IMR-90 (cell line): ENCODE measurements at regions of chr2 and their contacts with region 1.

Region 1: GRCh38 chr2:11224887-11225286 is 69.6 kb downstream of the SLC66A3 start:
- DNase-seq: no peak
- ATAC-seq: no peak
- H3K4me3 ChIP-seq: no peak overlapping the region
- H3K27ac ChIP-seq: no peak overlapping the region
- H3K4me1 ChIP-seq: no peaks in the 10 kb centered on the region
- H3K27me3 ChIP-seq: no peaks in the 10 kb centered on the region
- CTCF ChIP-seq: no peak
- POLR2A ChIP-seq: no peak
- RAD21 ChIP-seq: no peak

Region 2: GRCh38 chr2:11187083-11187619 is 37.7 kb before region 1 on chr2:
- CTCF ChIA-PET with region 1: no interaction called
- POLR2A ChIA-PET with region 1: no interaction called
- dilution Hi-C with region 1: no loop called
- in situ Hi-C with region 1: no loop called
- intact Hi-C with region 1: loop called (anchors 5 kb)
- DNase-seq: peak; percentile 77
- ATAC-seq: peak; percentile 77
- H3K4me3 ChIP-seq: no peak overlapping the region
- H3K27ac ChIP-seq: no peak overlapping the region
- H3K4me1 ChIP-seq: peaks cover 2% of the 10 kb centered on the region; the same call in 1 of the 2 replicates
- H3K27me3 ChIP-seq: no peaks in the 10 kb centered on the region
- CTCF ChIP-seq: no peak
- POLR2A ChIP-seq: no peak
- RAD21 ChIP-seq: no peak

Region 3: DNA sequence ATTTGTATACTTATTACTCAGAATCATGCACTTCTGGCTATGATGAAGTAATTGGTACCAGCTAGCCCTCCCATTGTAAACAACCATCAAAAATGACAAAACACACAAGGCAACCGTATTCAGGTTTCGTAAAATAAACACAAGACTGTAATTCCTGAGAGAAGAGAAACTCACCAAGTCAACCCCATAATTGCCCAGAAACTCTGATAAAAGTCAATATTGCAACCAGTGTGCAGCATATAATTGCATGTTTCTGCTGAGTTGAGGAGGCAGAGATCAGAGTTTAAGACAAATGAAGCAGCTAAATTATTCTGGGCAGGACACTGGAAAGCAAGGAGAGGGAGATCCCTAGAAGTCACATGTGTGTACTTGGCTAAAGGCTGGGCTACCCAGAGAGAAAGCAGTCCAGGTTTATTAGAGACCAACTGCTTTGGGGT is 29.2 kb after region 1 on chr2:
- CTCF ChIA-PET with region 1: no interaction called
- POLR2A ChIA-PET with region 1: no interaction called
- dilution Hi-C with region 1: no loop called
- in situ Hi-C with region 1: no loop called
- intact Hi-C with region 1: no loop called
- DNase-seq: peak; percentile 28
- ATAC-seq: peak; percentile 63
- H3K4me3 ChIP-seq: no peak overlapping the region
- H3K27ac ChIP-seq: peak overlapping the region; percentile 2; the same call in 1 of the 2 replicates
- H3K4me1 ChIP-seq: peaks cover 7% of the 10 kb centered on the region
- H3K27me3 ChIP-seq: no peaks in the 10 kb centered on the region
- CTCF ChIP-seq: no peak
- POLR2A ChIP-seq: no peak
- RAD21 ChIP-seq: no peak